ENCODE measurements at regions of chr10 and their contacts with region 1.

Region 1: GRCh38 chr10:101587725-101588653 is at the starts of genes DPCD and POLL:
- DNase-seq: peak; percentile 83 to 86 (median 85)
- H3K4me3 ChIP-seq: peak within 1 kb of the TSS; percentile 79 to 81
- H3K4me3 Mint-ChIP-seq: peak within 1 kb of the TSS; percentile 94 to 97 (median 94)
- H3K27ac ChIP-seq: peak within 1 kb of the TSS; percentile 64
- H3K27ac Mint-ChIP-seq: peak within 1 kb of the TSS; percentile 82 to 93 (median 91)
- H3K4me1 ChIP-seq: peaks cover 17% of the 10 kb centered on the region
- H3K4me1 Mint-ChIP-seq: peaks cover 11 to 40% (median 26%) of the 10 kb centered on the region in 4 donors
- H3K27me3 ChIP-seq: no peaks in the 10 kb centered on the region
- H3K27me3 Mint-ChIP-seq: no peaks in the 10 kb centered on the region
- total RNA-seq, gene DPCD: 1.0 to 1.2 TPM
- total RNA-seq, gene POLL: 57.0 to 59.3 TPM

Region 2: DNA sequence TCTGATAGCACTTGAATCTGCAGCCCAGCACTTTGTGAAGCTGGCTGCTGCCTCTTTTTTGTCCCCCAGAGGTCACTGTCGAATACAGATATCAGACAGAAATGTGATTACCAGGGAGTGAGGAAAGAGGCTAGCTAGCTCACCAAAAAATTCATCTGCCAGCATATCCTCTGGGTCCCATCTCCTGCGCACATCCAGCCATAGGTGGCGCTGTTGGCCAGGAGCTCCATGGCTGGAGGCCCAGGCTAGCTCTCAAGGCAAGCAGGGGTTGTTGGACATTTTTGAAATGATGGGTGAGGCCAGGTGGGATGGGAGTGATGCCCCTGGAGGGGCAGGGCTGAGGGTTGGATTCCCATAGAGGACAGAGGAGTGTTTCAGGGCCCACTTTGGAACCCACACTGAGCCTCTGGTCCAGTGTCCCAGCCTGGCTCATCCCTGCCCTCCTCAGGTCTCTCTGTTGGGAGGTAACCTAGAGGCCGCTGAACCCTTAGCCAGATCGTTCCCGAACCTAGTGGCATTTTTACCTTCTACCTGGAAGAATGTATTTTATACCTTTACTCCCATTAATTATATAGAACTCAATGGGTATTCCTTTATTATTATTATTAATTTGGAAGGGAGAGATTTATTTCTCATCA is 14.9 kb after region 1 on chr10:
- CTCF ChIA-PET with region 1: interaction called, 13 read pairs
- POLR2A ChIA-PET with region 1: interaction called, 3 read pairs
- intact Hi-C with region 1: no loop called
- DNase-seq: peak; percentile 33 to 58 (median 41)
- H3K4me3 ChIP-seq: no peak overlapping the region
- H3K4me3 Mint-ChIP-seq: no peak overlapping the region
- H3K27ac ChIP-seq: no peak overlapping the region
- H3K27ac Mint-ChIP-seq: peak overlapping the region in 3 of 7 donors; percentile 4 to 31 (median 27)
- H3K4me1 ChIP-seq: no peaks in the 10 kb centered on the region
- H3K4me1 Mint-ChIP-seq: no peaks in the 10 kb centered on the region
- H3K27me3 ChIP-seq: no peaks in the 10 kb centered on the region
- H3K27me3 Mint-ChIP-seq: no peaks in the 10 kb centered on the region

Region 3: DNA sequence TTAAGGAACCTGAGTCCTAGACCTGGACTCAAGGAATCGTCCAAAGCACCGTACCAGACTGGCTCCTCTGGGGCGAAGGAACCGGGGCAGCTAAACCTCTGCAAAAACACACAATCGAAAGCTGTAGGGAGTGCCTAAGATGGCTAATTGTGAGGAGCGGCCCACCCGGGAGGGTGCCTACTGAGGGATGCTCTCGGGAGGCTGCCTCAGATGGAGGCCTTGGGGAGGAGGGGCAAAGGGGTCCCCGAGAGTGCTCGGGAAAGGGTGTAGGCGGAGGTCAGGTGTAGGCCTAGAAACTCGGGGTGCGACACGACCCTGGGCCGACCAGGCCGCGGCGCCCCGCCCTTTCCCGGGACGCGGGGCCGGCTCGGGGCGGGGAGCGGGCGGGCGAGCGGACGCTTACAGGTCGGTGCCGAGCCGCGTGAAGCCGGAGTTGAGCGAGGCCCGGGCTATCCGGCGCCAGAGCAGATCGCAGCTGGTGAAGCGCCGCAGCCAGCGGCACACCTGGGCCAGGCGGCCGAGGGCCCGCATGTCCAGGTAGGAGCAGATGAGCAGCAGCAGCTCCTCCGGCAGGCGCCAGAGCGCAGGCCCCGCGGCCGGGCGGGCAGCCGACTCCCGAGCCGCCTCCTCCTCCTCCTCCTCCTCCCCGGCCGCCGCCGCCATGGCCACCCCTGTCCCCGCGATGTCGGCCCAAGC is 106.1 kb after region 1 on chr10:
- CTCF ChIA-PET with region 1: no interaction called
- POLR2A ChIA-PET with region 1: interaction called, 12 read pairs
- intact Hi-C with region 1: no loop called
- DNase-seq: peak; percentile 71 to 76 (median 72)
- H3K4me3 ChIP-seq: peak overlapping the region; percentile 86 to 87
- H3K4me3 Mint-ChIP-seq: peak overlapping the region; percentile 93 to 99 (median 96)
- H3K27ac ChIP-seq: peak overlapping the region; percentile 99
- H3K27ac Mint-ChIP-seq: peak overlapping the region; percentile 97 to 99 (median 99)
- H3K4me1 ChIP-seq: peaks cover 46% of the 10 kb centered on the region
- H3K4me1 Mint-ChIP-seq: peaks cover 32 to 60% (median 41%) of the 10 kb centered on the region in 4 donors
- H3K27me3 ChIP-seq: no peaks in the 10 kb centered on the region
- H3K27me3 Mint-ChIP-seq: no peaks in the 10 kb centered on the region

Region 4: GRCh38 chr10:101830322-101831168 is 242.6 kb after region 1 on chr10:
- CTCF ChIA-PET with region 1: no interaction called
- POLR2A ChIA-PET with region 1: no interaction called
- intact Hi-C with region 1: no loop called
- DNase-seq: peak; percentile 95 to 98 (median 97)
- H3K4me3 ChIP-seq: peak overlapping the region; percentile 57 to 68
- H3K4me3 Mint-ChIP-seq: peak overlapping the region; percentile 84 to 93 (median 88)
- H3K27ac ChIP-seq: peak overlapping the region; percentile 87
- H3K27ac Mint-ChIP-seq: peak overlapping the region; percentile 98 to 100 (median 99)
- H3K4me1 ChIP-seq: peaks cover 59% of the 10 kb centered on the region
- H3K4me1 Mint-ChIP-seq: peaks cover 44 to 80% (median 57%) of the 10 kb centered on the region in 4 donors
- H3K27me3 ChIP-seq: no peaks in the 10 kb centered on the region
- H3K27me3 Mint-ChIP-seq: peaks cover 2 to 7% of the 10 kb centered on the region in 2 donors